Thyroid gland (tissue), 4 donors: ENCODE measurements at regions of chr9 and their contacts with region 1.

Region 1: GRCh38 chr9:113275157-113276131 is at the starts of genes CDC26 and PRPF4:
- DNase-seq: peak; percentile 96 to 97
- H3K4me3 ChIP-seq: peak within 1 kb of the TSS; percentile 70 to 77 (median 73)
- H3K27ac ChIP-seq: peak within 1 kb of the TSS; percentile 77 to 87 (median 86)
- H3K4me1 ChIP-seq: peaks cover 12 to 17% of the 10 kb centered on the region in 2 donors
- H3K27me3 ChIP-seq: no peaks in the 10 kb centered on the region
- CTCF ChIP-seq: no peak
- POLR2A ChIP-seq: peak in 1 of 2 donors; percentile 84
- total RNA-seq, gene CDC26: 23.0 to 73.5 (median 38.3) TPM
- total RNA-seq, gene PRPF4: 17.7 to 25.8 (median 21.7) TPM

Region 2: GRCh38 chr9:112925058-112925641 is 350.3 kb before region 1 on chr9:
- intact Hi-C with region 1: no loop called
- DNase-seq: peak; percentile 6 to 11
- H3K4me3 ChIP-seq: no peak overlapping the region
- H3K27ac ChIP-seq: no peak overlapping the region
- H3K4me1 ChIP-seq: no peaks in the 10 kb centered on the region
- H3K27me3 ChIP-seq: no peaks in the 10 kb centered on the region
- CTCF ChIP-seq: peak in 4 of 6 experiments; percentile 15 to 56 (median 44)
- POLR2A ChIP-seq: no peak

Region 3: GRCh38 chr9:113221003-113221799 is 54.2 kb before region 1 on chr9 and contains the starts of genes FKBP15 and SLC31A1:
- intact Hi-C with region 1: loop called (anchors 10 kb)
- DNase-seq: peak; percentile 98
- H3K4me3 ChIP-seq: peak within 1 kb of the TSS; percentile 50 to 96 (median 77)
- H3K27ac ChIP-seq: peak within 1 kb of the TSS; percentile 50 to 78 (median 72)
- H3K4me1 ChIP-seq: peaks cover 19 to 26% of the 10 kb centered on the region in 2 donors
- H3K27me3 ChIP-seq: no peaks in the 10 kb centered on the region
- CTCF ChIP-seq: no peak
- POLR2A ChIP-seq: peak; percentile 37 to 82
- total RNA-seq, gene FKBP15: 25.0 to 30.6 (median 29.1) TPM
- total RNA-seq, gene SLC31A1: 12.0 to 21.6 (median 19.5) TPM

Region 4: GRCh38 chr9:113409883-113410206 is 134.4 kb after region 1 on chr9:
- intact Hi-C with region 1: loop called (anchors 5 kb)
- DNase-seq: no peak
- H3K4me3 ChIP-seq: peak overlapping the region; percentile 67 to 79 (median 67)
- H3K27ac ChIP-seq: peak overlapping the region; percentile 97 to 99 (median 99)
- H3K4me1 ChIP-seq: peaks cover 6 to 11% of the 10 kb centered on the region in 2 donors
- H3K27me3 ChIP-seq: no peaks in the 10 kb centered on the region
- CTCF ChIP-seq: no peak
- POLR2A ChIP-seq: no peak